Posterior vena cava (tissue), 2 donors: ENCODE measurements at regions of chr10 and their contacts with region 1.

Region 1: DNA sequence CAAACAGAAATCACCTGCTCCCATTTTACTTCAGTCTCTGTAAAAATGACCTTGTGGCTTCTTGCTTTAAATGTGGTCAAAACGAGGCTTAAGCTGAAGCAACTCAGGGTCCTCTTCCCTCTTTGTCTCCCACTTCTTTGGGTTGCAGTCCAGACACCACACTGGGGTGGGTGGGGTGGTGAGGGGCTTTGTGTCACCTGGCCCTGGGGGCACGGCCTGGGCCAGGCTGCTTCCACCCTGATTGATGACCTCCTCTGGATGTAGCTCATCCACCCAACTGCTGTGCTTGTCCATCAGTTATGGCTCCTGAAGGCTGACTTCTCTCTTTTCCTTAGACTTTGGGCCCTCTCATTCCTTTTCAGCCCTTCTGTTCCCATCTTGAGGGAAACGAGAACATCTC is 26.8 kb upstream of the NPS start:
- DNase-seq: no peak

Region 2: DNA sequence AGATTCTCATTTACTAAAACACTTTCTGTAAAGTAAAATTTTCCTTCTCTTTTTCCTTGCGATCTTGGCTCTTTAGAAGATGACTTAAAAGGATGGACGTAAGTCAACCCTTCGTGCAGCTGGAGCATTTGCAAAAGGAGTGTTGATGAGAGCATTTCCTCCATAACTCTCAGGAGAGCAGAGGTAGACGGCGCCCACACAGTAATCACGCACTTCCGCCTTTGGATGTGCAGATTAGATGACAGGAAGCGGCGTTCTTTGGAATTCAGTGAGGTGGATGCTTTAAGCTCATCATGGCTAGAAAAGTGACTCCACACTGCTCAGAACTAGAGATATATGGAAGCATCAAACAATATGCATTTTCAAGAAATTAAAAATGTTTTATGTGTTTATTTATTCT is 16.2 kb before region 1 on chr10:
- intact Hi-C with region 1: no loop called
- DNase-seq: no peak

Region 3: GRCh38 chr10:127578628-127579305 is 56.5 kb after region 1 on chr10:
- intact Hi-C with region 1: loop called in 1 of 2 experiments (anchors 2 kb)
- DNase-seq: no peak